B cell (primary cell): ENCODE measurements at regions of chr3 and their contacts with region 1.

Region 1: DNA sequence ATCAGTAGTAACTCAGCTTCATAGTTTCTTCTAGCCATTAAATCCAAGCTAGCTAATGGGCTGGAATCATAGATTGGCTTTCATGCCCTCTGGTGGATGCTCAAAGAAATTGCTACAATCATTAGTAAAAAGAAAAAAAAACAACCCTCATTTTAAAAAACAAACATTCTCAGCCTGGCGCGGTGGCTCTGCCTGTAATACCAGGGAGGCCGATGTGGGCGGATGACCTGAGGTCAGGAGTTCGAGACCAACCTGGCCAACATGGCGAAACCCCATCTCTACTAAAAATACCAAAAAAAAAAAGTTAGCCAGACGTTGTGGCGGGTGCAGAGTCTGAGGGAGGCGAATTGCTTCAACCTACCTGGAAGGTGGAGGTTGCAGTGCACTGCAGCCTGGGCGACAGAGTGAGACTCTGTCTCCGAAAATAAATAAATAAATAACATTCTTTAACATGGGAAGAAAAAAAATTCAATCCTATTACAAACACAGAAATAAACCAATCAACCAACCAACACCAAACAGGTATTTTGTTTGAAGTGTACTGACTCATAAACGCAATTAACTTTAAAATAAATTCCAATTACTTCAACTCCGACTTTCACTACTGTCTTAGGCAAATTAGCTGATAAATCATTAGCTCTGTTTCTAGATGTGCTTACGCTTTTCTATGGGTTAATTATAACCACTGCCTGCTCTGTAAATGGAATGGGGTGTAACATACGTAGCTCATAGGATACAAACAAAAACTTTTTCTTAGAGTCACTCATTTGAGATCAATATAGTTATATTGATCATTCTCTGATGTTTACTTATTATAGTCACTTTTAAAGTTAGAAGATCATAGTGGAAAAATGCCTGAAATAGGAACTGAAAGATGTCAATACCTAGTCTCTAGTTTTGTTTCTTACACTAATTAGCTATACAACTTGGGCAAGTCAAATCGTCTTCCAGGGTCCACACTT is 24.9 kb downstream of the TMEM207 start:
- DNase-seq: peak; percentile 42
- ATAC-seq: no peak
- H3K4me3 ChIP-seq: no peak overlapping the region
- H3K4me3 Mint-ChIP-seq: no peak overlapping the region
- H3K27ac ChIP-seq: no peak overlapping the region
- H3K27ac Mint-ChIP-seq: no peak overlapping the region
- H3K4me1 ChIP-seq: no peaks in the 10 kb centered on the region
- H3K4me1 Mint-ChIP-seq: peaks cover 4% of the 10 kb centered on the region
- H3K27me3 ChIP-seq: peaks cover 0 to 2% (median 0%) of the 10 kb centered on the region in 4 experiments
- H3K27me3 Mint-ChIP-seq: peaks cover 3% of the 10 kb centered on the region
- CTCF ChIP-seq: peak; percentile 72

Region 2: DNA sequence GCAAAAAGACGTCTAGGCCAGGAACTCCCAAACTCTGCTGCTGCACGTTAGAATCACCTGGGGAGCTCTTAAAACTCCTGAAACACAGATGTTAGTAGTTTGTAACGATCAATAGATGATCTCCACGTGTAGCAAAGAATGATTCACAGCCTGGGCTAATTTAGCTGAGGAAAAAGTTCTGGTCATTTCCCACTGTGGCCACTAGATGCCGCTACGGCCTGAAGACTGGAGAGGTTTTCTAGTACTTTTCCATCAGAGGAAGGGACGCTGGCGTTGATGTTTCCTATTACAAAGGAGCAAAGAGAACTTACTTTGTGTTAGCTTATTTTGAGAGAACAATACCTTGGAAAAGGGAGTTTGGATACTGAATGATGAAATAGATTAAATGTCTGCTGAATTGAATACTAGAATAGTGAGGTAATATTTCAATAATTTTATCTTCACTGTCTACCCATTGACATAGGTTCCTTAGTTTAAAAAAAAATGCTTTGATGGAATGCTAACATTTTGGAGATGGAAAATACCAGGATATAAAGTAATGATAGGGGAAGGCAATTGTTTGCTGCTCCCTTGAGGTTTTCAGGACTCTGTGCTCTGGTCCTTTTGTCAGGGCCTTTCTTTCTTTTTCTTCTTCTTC is 463.1 kb before region 1 on chr3:
- CTCF ChIA-PET with region 1: no interaction called
- POLR2A ChIA-PET with region 1: no interaction called
- intact Hi-C with region 1: loop called (anchors 10 kb)
- DNase-seq: peak; percentile 49
- ATAC-seq: peak; percentile 58
- H3K4me3 ChIP-seq: no peak overlapping the region
- H3K4me3 Mint-ChIP-seq: no peak overlapping the region
- H3K27ac ChIP-seq: no peak overlapping the region
- H3K27ac Mint-ChIP-seq: no peak overlapping the region
- H3K4me1 ChIP-seq: no peaks in the 10 kb centered on the region
- H3K4me1 Mint-ChIP-seq: peaks cover 1% of the 10 kb centered on the region
- H3K27me3 ChIP-seq: no peaks in the 10 kb centered on the region
- H3K27me3 Mint-ChIP-seq: peaks cover 16% of the 10 kb centered on the region
- CTCF ChIP-seq: peak; percentile 97

Region 3: GRCh38 chr3:190321789-190322603 is 102.8 kb before region 1 on chr3 and contains the start of gene CLDN1:
- CTCF ChIA-PET with region 1: no interaction called
- POLR2A ChIA-PET with region 1: no interaction called
- intact Hi-C with region 1: no loop called
- DNase-seq: peak; percentile 45
- ATAC-seq: peak; percentile 39
- H3K4me3 ChIP-seq: peak within 1 kb of the TSS in 1 of 5 experiments; percentile 13
- H3K4me3 Mint-ChIP-seq: peak within 1 kb of the TSS; percentile 54
- H3K27ac ChIP-seq: no peak within 1 kb of the TSS
- H3K27ac Mint-ChIP-seq: no peak within 1 kb of the TSS
- H3K4me1 ChIP-seq: peaks cover 4 to 12% of the 10 kb centered on the region in 2 donors
- H3K4me1 Mint-ChIP-seq: peaks cover 16% of the 10 kb centered on the region
- H3K27me3 ChIP-seq: peaks cover 0 to 22% (median 14%) of the 10 kb centered on the region in 4 experiments
- H3K27me3 Mint-ChIP-seq: peaks cover 51% of the 10 kb centered on the region
- CTCF ChIP-seq: peak; percentile 53
- total RNA-seq, gene CLDN1: not detected in 2 replicates

Region 4: GRCh38 chr3:190414297-190414696 is 10.5 kb before region 1 on chr3:
- CTCF ChIA-PET with region 1: interaction called, 12 read pairs
- POLR2A ChIA-PET with region 1: no interaction called
- intact Hi-C with region 1: no loop called
- DNase-seq: no peak
- ATAC-seq: no peak
- H3K4me3 ChIP-seq: no peak overlapping the region
- H3K4me3 Mint-ChIP-seq: no peak overlapping the region
- H3K27ac ChIP-seq: no peak overlapping the region
- H3K27ac Mint-ChIP-seq: no peak overlapping the region
- H3K4me1 ChIP-seq: no peaks in the 10 kb centered on the region
- H3K4me1 Mint-ChIP-seq: no peaks in the 10 kb centered on the region
- H3K27me3 ChIP-seq: no peaks in the 10 kb centered on the region
- H3K27me3 Mint-ChIP-seq: peaks cover 4% of the 10 kb centered on the region
- CTCF ChIP-seq: no peak